Heart right ventricle (tissue), 16 donors: ENCODE measurements at regions of chr13 and their contacts with region 1.

Region 1: GRCh38 chr13:44237276-44237767 is 136.3 kb upstream of the SERP2 start:
- DNase-seq: peak; percentile 32 to 90
- ATAC-seq: peak; percentile 97 to 99 (median 98)
- H3K4me3 ChIP-seq: peak overlapping the region in 1 of 10 donors; percentile 14
- H3K27ac ChIP-seq: peak overlapping the region; percentile 71 to 94 (median 88)
- H3K4me1 ChIP-seq: peaks cover 20 to 40% (median 32%) of the 10 kb centered on the region in 9 donors
- H3K27me3 ChIP-seq: no peaks in the 10 kb centered on the region
- CTCF ChIP-seq: no peak

Region 2: DNA sequence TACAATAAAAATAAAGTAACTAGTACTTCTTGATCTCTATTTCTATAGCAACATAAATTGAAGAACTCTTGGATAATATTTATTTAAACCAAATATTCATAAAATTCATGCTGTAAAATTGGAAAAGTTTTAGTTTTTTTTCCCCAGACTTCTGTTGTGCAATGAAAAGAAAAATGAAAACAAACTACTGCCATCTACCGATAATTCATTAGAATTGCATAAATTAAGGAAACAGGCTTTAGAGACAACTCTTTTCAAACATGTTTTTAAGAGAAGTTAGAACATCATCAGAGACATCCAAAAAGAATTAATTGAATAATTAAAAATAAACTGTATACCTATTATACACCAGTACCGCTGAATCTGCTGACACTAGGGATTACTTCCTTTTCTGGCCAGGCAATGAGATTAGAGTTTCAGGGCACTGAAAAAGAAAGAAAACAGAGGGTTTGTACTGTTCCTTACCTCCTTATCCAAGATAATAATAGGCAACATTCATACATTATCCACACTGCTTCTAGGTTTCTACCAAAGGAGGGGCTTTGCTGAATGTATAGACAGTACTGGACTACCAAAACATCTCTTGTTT is 362.7 kb before region 1 on chr13:
- intact Hi-C with region 1: no loop called
- DNase-seq: no peak
- ATAC-seq: no peak
- H3K4me3 ChIP-seq: no peak overlapping the region
- H3K27ac ChIP-seq: peak overlapping the region in 1 of 10 donors; percentile 12
- H3K4me1 ChIP-seq: peaks cover 0 to 25% (median 7%) of the 10 kb centered on the region in 9 donors
- H3K27me3 ChIP-seq: no peaks in the 10 kb centered on the region
- CTCF ChIP-seq: peak; percentile 24 to 81 (median 67)

Region 3: DNA sequence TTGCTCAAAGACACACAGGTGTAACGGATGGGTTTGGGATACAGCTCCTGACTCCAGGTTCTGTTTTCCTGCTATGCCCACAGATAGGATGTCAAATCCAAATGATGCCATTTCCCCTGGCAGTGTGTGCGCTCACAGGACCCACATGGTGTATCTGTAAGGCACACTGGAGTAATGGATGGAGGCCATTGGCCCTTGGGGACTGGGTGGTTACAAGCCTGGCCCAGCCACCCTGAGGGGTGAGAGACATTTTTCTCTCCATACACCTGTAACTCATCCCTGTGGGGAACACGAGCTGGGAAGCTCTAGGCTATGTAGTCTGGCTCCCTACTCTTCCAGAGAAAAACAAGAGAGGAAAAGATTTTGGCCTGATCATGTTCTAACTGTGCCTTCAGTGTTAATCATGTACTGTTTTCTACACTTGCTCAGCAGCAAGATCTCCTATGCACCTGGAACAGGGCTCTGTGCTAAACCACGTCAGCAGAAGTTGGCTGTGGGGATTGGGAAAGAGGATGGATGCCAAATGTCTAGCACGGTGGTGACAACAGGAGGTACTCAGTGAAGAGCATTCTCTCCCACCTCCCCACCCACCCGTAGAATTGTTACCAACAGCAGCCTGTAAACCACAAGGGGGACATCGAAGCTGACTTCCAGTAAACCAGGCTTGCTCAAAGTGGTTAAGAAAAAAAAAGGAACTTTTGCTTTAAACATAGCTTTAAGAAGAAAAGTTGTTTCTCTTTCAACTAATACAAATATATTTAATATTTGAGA is 120.6 kb before region 1 on chr13:
- intact Hi-C with region 1: loop called in 1 of 10 experiments (anchors 5 kb)
- DNase-seq: peak in 1 of 2 donors; percentile 40
- ATAC-seq: peak; percentile 66 to 98 (median 87)
- H3K4me3 ChIP-seq: no peak overlapping the region
- H3K27ac ChIP-seq: peak overlapping the region; percentile 19 to 77 (median 74)
- H3K4me1 ChIP-seq: peaks cover 8 to 37% (median 23%) of the 10 kb centered on the region in 9 donors
- H3K27me3 ChIP-seq: no peaks in the 10 kb centered on the region
- CTCF ChIP-seq: peak in 3 of 9 donors; percentile 30 to 36 (median 34)

Region 4: DNA sequence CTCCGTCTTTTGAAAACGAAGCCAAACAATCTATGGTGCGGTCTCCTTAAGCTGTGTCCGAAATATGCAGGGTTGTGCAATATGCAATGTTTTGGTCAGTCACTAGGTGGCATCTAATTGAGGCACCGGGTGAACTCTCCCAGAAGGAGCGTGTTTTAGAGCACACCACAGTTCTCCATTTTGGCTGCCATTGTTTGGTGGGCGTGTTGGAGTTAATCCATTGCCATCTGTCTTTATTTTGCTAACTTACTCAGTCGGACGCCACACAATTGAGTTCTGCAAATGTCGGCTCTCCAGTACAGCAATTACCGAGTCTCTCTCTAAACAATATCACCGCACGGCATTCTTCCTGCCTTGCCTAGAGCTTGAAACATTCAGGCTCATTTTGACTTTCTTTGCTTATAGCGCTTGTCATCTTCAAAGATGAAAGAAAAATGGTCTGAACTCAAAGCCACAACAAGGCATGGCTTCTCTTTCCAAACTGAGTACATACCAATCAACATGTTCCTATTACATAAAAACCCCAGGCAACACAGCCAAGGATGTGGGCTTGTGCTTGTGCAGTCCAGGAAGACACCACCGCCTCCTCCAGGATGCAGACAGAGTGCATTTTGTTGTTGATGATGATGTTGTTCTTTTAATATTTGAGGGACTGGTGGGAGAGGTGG is 45.7 kb before region 1 on chr13:
- intact Hi-C with region 1: loop called in 4 of 10 experiments (anchors 5 kb)
- DNase-seq: peak in 1 of 2 donors; percentile 71
- ATAC-seq: peak; percentile 76 to 97 (median 95)
- H3K4me3 ChIP-seq: peak overlapping the region in 3 of 10 donors; percentile 21
- H3K27ac ChIP-seq: peak overlapping the region in 6 of 10 donors; percentile 10 to 62 (median 51)
- H3K4me1 ChIP-seq: peaks cover 0 to 11% (median 0%) of the 10 kb centered on the region in 9 donors
- H3K27me3 ChIP-seq: no peaks in the 10 kb centered on the region
- CTCF ChIP-seq: peak; percentile 51 to 80 (median 70)

Region 5: GRCh38 chr13:44219577-44220548 is 17.5 kb before region 1 on chr13:
- intact Hi-C with region 1: loop called in 1 of 10 experiments (anchors 1 kb)
- DNase-seq: no peak
- ATAC-seq: peak in 7 of 8 donors; percentile 15 to 37 (median 27)
- H3K4me3 ChIP-seq: no peak overlapping the region
- H3K27ac ChIP-seq: peak overlapping the region; percentile 36 to 68 (median 54)
- H3K4me1 ChIP-seq: peaks cover 6 to 45% (median 30%) of the 10 kb centered on the region in 9 donors
- H3K27me3 ChIP-seq: no peaks in the 10 kb centered on the region
- CTCF ChIP-seq: no peak

Region 6: DNA sequence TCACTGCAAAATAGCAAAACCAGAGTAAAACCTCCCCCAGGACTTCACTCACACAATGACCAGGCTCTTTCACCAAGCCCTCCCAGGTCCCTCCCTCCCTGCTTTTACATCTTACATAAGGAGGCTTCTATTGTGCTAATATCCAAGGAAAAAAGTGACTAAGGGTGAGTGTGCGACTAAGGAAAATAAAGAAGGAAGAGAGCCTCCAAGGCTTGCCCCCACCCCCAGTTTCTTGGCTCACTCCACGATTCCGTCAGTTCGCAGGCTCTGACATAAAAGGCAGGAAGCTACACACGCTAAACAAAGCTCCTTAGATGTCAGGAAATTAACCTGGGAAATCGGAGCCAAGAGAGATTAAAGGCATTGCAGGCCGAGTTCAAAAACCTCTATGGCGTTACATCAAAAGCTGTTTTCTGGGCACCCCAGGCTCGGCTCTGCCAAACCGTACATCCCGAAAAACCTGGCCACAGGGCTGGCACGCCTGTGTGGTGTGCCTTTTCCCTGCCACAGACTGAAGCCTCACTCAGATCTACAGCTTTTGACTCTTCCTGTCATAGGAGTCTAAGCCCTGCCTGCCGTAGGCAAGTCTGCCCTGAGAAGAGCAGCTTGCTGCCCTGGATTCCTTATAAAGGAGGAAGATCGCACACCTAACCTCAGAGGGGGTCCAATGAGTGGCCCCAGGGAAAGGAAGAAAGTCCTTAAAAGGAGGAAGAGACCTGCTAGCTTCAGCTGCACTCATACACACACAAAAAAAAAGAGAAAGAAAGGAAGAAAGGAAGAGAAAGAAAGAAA is 69.3 kb after region 1 on chr13:
- intact Hi-C with region 1: loop called in 3 of 10 experiments (anchors 2 to 5 kb)
- DNase-seq: peak; percentile 49 to 89
- ATAC-seq: peak; percentile 58 to 89 (median 72)
- H3K4me3 ChIP-seq: peak overlapping the region in 3 of 10 donors; percentile 22 to 25 (median 22)
- H3K27ac ChIP-seq: peak overlapping the region; percentile 39 to 95 (median 89)
- H3K4me1 ChIP-seq: peaks cover 5 to 94% (median 52%) of the 10 kb centered on the region in 9 donors
- H3K27me3 ChIP-seq: no peaks in the 10 kb centered on the region
- CTCF ChIP-seq: no peak